ENCODE measurements at regions of chr19 and their contacts with region 1.

Region 1: GRCh38 chr19:588093-588740 is 1.5 kb upstream of the HCN2 start:
- DNase-seq: peak; percentile 88
- H3K4me3 Mint-ChIP-seq: peak overlapping the region; percentile 28
- H3K27ac Mint-ChIP-seq: no peak overlapping the region
- H3K4me1 Mint-ChIP-seq: peaks cover 2% of the 10 kb centered on the region
- H3K27me3 Mint-ChIP-seq: peaks cover 13% of the 10 kb centered on the region

Region 2: DNA sequence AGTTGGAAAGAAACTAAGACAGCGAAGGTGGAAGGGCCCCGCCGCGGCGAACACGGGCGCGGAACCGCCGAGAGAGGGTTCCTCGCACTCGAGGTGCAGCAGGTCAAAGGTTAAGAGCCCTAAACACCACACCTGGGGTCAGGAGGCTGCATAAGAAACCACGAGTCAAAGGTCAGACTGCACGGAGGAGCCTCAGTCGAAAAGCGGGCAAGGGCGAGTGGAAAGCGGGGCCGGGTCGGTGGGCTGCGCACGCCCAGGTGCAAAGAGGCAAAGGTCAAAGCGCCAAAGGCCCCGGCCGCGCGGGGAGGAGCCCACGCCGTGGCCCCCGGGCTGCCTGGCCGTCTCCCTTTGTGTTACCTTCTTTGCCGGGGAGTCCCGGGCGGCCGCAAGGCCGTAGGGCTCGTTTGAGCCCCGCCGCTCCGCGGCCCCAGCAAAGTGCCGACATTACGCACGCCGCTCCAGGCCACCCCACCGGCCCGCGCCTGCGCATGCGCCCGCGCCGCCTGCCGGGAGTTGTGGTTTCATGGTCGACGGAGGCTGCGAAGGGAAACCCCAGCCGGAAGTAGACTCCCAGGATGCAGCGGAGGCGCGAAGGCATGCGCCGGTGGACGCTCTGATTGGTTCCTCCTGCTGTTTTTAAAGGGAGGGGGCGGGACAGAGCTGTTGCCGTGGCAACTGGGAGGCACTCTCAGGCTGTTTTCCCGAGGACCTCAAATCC is 45.0 kb after region 1 on chr19 and contains the start of gene POLRMT:
- intact Hi-C with region 1: loop called (anchors 2 kb)
- DNase-seq: peak; percentile 99
- H3K4me3 Mint-ChIP-seq: peak within 1 kb of the TSS; percentile 98
- H3K27ac Mint-ChIP-seq: peak within 1 kb of the TSS; percentile 97
- H3K4me1 Mint-ChIP-seq: peaks cover 17% of the 10 kb centered on the region
- H3K27me3 Mint-ChIP-seq: no peaks in the 10 kb centered on the region
- total RNA-seq, gene POLRMT: 103 and 104 TPM in 2 replicates

Region 3: GRCh38 chr19:732148-733069 is 144.2 kb after region 1 on chr19:
- intact Hi-C with region 1: loop called (anchors 5 kb)
- DNase-seq: no peak
- H3K4me3 Mint-ChIP-seq: no peak overlapping the region
- H3K27ac Mint-ChIP-seq: peak overlapping the region; percentile 11
- H3K4me1 Mint-ChIP-seq: peaks cover 11% of the 10 kb centered on the region
- H3K27me3 Mint-ChIP-seq: no peaks in the 10 kb centered on the region

Measured in activated CD4-positive, alpha-beta T cell treated with anti-CD3 and anti-CD28 coated beads, Interleukin-2, amount 10 ng/mL, durations not matched to agents 24 days and 14 days (primary cell).